Vagina (tissue), 2 donors: ENCODE measurements at regions of chr13 and their contacts with region 1.

Region 1: DNA sequence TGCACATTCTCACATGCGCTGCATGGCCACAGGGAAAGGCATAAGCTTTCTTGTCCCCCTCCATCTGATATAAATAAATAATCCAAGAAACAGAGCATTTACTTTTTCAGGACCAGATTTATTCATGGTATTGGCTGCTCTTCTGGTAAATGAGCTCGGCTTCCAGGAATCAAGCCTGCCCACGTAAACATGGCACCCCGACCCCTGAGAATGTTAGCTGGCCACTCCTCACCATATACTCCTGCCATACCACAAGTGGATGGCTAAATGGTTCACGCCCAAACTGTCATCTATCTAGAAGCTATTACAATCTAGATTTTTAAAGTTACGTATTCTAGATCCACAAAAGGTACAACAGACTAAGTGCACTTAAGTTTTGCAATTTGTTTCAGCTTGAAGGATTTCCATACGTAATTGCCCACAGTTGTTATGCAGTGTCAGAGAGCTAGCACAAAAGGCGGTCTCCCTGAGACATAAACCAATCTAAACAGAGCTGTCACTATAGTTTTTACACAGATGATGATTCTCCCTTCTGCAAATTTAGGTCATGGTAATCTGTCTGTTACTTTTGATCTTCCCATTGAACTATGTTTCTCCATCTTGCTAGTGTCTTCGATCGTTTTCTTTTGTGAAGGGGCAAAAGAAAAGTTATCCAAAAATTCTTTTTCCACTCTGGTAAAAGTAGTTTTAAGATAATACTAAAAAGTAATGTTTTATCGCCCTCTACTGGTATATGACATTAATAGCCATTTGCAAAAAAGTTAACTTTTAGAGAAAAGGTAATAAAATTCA is 16.2 kb upstream of the FOXO1 start:
- DNase-seq: no peak
- H3K4me3 ChIP-seq: no peak overlapping the region
- H3K27ac ChIP-seq: no peak overlapping the region
- H3K4me1 ChIP-seq: no peaks in the 10 kb centered on the region
- H3K27me3 ChIP-seq: no peaks in the 10 kb centered on the region
- CTCF ChIP-seq: peak; percentile 31 to 74 (median 63)
- POLR2A ChIP-seq: no peak

Region 2: DNA sequence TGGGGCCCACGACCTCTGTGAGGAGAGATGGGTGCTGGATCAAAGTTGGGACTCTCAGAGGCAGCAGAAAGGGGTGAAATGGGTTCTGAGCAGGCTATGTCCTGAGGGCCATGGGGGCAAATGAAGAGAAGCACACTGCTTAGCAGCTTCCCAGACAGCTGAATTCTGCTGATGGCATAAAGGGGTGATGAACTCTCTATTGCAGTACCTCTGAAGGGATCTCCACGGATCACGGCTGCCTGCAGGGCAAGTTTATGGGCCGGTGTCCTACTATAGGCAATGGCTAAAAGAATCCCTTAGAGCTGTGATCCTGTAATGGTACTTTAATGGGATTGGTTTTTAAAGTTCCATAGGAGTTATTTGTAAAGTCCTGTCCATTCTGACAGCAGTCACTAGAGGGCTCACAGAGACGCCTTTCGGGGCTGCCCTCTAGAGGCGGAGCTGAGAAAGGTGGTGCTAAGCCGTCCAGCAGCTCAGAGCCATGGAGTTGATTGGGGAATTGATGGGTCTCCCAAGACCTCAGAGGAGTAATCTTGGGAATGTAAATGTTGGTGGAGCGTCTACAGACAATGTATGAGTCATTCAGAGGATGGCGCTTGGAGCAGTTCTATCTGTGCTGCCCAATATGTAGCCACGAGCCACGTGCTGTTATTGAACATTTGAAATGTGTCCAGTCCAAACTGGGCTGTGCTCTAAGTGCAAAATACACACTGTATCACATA is 739.9 kb before region 1 on chr13:
- intact Hi-C with region 1: loop called (anchors 10 kb)
- DNase-seq: no peak
- H3K4me3 ChIP-seq: no peak overlapping the region
- H3K27ac ChIP-seq: no peak overlapping the region
- H3K4me1 ChIP-seq: peaks cover 5% of the 10 kb centered on the region
- H3K27me3 ChIP-seq: no peaks in the 10 kb centered on the region
- CTCF ChIP-seq: peak; percentile 41 to 81 (median 62)
- POLR2A ChIP-seq: no peak